Dendritic cell treated with granulocyte-macrophage colony-stimulating factor and Interleukin-4, amounts not matched to agents 40 ng/mL and 50 ng/mL, for 4 days (primary cell): ENCODE measurements at regions of chr18 and their contacts with region 1.

Region 1: GRCh38 chr18:3281456-3282400 is 19.8 kb downstream of the MYL12B start:
- H3K4me3 Mint-ChIP-seq: no peak overlapping the region
- H3K27ac Mint-ChIP-seq: no peak overlapping the region
- H3K4me1 Mint-ChIP-seq: peaks cover 27% of the 10 kb centered on the region
- H3K27me3 Mint-ChIP-seq: no peaks in the 10 kb centered on the region

Region 2: GRCh38 chr18:3455907-3456685 is 174.4 kb after region 1 on chr18:
- intact Hi-C with region 1: loop called (anchors 1 kb)
- H3K4me3 Mint-ChIP-seq: no peak overlapping the region
- H3K27ac Mint-ChIP-seq: no peak overlapping the region
- H3K4me1 Mint-ChIP-seq: peaks cover 34% of the 10 kb centered on the region
- H3K27me3 Mint-ChIP-seq: no peaks in the 10 kb centered on the region

Region 3: DNA sequence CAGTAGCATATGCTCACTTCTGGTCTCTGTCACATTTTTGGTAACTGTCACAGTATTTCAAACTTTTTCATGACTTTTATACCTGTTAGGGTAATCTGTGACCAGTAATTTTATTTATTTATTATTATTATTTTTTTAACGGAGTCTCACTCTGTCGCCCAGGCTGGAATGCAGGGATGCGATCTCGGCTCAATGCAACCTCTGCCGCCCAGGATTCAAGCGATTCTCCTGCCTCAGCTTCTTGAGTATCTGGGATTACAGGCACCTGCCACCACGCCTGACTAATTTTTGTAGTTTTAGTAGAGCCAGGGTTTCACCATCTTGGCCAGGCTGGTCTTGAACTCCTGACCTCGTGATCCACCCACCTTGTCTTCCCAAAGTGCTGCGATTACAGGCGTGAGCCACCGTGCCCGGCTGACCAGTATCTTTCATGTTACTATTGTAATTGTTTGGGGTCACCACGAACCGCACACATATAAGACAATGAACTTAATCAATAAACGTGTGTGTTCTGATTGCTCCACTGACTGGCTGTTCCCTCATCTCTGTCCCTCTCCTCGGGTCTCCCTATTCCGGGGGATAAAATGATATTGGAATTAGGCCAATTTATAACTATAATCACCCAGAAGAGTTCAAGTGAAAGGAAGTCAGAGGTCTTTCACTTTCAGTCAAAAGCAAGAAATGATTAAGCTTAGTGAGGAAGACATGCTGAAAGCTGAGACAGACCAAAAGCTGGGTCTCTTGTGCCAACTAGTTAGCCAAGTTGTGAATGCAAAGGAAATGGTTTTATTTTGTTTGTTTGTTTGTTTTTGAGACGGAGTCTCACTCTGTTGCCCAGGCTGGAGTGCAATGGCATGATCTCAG is 191.2 kb after region 1 on chr18:
- intact Hi-C with region 1: no loop called
- H3K4me3 Mint-ChIP-seq: no peak overlapping the region
- H3K27ac Mint-ChIP-seq: no peak overlapping the region
- H3K4me1 Mint-ChIP-seq: peaks cover 6% of the 10 kb centered on the region
- H3K27me3 Mint-ChIP-seq: no peaks in the 10 kb centered on the region

Region 4: GRCh38 chr18:3585656-3586509 is 304.2 kb after region 1 on chr18:
- intact Hi-C with region 1: loop called (anchors 1 kb)
- H3K4me3 Mint-ChIP-seq: no peak overlapping the region
- H3K27ac Mint-ChIP-seq: peak overlapping the region; percentile 30
- H3K4me1 Mint-ChIP-seq: peaks cover 25% of the 10 kb centered on the region
- H3K27me3 Mint-ChIP-seq: no peaks in the 10 kb centered on the region

Region 5: DNA sequence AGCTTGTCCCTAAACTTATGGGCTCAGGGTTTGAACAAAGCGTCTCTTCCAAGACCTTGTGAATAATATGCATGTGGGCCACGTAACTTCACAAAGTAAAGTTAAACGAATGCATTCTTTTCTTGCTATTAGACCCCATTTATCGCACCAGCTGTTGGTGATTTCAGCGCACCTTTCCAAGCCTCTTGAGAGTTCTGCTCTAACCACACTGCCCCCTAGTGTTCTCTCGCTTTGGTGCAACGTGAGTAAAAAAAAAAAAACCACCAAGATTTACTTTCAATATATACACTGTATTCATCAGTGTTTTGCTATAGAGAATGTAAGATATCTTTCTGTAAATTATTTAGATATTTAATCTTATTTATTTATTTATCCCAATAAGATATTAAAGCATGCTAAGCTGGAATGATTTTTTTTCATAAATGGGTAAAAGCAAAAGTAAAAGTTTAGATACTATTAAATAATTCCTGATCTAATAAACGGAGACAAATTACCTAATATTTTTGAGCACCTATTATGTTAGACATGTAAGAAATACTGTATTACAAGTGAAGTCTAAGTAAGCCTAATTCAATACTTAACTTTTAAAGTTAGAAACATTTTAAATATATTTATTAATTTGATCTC is 713.9 kb after region 1 on chr18:
- intact Hi-C with region 1: loop called (anchors 2 kb)
- H3K4me3 Mint-ChIP-seq: no peak overlapping the region
- H3K27ac Mint-ChIP-seq: no peak overlapping the region
- H3K4me1 Mint-ChIP-seq: no peaks in the 10 kb centered on the region
- H3K27me3 Mint-ChIP-seq: peaks cover 2% of the 10 kb centered on the region